Activated CD8-positive, alpha-beta T cell treated with anti-CD3 and anti-CD28 coated beads for 36 hours (primary cell): ENCODE measurements at regions of chr1 and their contacts with region 1.

Region 1: GRCh38 chr1:30801771-30802198 is 44.2 kb upstream of the LAPTM5 start:
- DNase-seq: peak; percentile 89
- ATAC-seq: peak; percentile 83
- H3K4me3 Mint-ChIP-seq: no peak overlapping the region
- H3K27ac Mint-ChIP-seq: no peak overlapping the region
- H3K4me1 Mint-ChIP-seq: peaks cover 2% of the 10 kb centered on the region
- H3K27me3 Mint-ChIP-seq: peaks cover 25% of the 10 kb centered on the region
- CTCF ChIP-seq: peak; percentile 97

Region 2: GRCh38 chr1:30732277-30732996 is 69.3 kb before region 1 on chr1:
- CTCF ChIA-PET with region 1: interaction called, 11 read pairs
- POLR2A ChIA-PET with region 1: no interaction called
- intact Hi-C with region 1: no loop called
- DNase-seq: no peak
- ATAC-seq: peak; percentile 32
- H3K4me3 Mint-ChIP-seq: no peak overlapping the region
- H3K27ac Mint-ChIP-seq: peak overlapping the region; percentile 73
- H3K4me1 Mint-ChIP-seq: peaks cover 22% of the 10 kb centered on the region
- H3K27me3 Mint-ChIP-seq: no peaks in the 10 kb centered on the region
- CTCF ChIP-seq: no peak

Region 3: DNA sequence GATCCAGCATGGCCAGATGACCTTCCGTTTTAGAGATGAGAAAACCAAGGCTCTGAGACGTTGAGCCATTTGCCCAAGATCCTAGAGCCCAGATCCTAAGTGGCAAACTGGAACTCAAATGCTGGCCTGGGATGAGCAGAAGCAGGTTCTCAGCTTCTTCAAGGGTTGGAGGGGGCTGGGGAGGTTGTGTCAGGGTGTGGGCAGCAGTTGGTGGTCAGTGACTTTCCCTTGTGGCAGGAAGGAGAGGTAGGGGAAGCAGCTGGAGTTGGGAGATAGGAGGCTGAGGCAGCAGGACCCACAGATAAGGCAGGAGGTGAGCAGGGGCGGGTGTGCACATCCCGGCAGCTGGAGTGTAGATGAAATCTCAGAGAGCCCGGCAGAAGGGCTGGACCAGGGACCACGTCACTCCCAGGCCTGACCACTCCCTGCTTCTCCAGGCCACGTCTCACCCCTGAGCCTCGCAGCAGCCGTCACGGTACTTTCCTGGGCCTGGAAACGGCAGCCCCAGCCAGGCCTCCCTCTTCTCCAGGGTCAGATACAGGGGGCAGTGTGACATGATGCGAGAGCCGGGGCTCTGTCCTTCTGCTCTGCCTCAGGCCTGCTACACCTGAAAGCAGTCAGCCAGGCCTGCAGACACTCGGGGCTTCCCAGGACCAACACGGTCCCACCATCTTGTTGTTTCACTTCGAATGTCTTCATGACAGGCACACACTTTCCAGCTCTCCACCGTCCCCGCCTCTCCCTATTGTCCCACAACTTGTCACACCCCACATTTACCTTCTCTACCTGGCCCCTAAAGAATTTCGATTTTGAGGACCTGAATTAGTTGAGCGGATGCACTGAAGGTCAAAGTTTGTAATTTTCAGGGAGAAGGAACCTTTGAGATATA is 32.7 kb before region 1 on chr1:
- CTCF ChIA-PET with region 1: no interaction called
- POLR2A ChIA-PET with region 1: no interaction called
- intact Hi-C with region 1: no loop called
- DNase-seq: no peak
- ATAC-seq: no peak
- H3K4me3 Mint-ChIP-seq: no peak overlapping the region
- H3K27ac Mint-ChIP-seq: peak overlapping the region; percentile 61
- H3K4me1 Mint-ChIP-seq: peaks cover 39% of the 10 kb centered on the region
- H3K27me3 Mint-ChIP-seq: no peaks in the 10 kb centered on the region
- CTCF ChIP-seq: no peak

Region 4: DNA sequence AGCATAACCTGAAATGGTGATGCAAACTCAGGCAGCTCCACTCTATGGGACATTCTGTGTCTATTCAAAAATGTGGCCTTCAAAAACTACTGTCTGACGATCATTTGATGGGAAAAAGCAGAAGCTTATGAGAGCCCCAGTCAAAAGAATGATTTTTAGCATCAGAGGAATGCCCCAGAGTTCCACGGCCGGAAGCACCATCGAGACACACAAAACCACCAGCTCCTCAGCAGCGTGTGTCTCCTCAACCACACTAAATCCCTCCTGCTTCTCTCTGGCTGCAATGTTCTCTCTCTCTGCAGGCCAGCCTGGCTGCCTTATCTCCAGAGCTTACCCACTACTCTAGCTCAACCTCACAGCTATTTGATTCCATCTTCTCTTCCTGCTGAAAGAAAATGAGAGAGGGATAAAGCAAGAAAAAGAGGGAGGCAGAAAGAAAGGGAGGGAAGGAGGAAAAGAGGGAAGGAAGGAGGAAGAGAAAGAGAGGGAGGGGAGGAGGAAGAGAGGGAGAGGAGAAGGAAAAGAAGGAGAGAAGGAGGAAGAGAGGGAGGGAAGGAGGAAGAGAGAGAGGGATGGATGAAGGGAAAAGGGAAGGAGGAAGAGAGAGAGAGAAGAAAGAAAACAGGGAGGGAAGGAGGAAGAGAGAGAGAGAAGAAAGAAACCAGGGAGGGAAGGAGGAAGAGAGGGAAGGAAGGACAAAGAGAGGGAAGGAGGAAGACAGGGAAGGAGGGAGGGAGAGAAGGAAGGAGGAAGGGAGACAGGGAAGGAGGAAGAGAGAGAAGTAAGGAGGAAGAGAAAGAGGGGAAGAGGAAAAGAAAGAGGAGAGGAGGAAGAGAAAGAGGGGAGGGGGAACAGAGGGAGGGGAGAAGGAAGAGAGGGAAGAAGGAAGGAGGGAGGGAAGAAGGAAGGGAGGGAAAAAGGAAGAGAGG is 10.7 kb before region 1 on chr1:
- CTCF ChIA-PET with region 1: interaction called, 80 read pairs
- POLR2A ChIA-PET with region 1: no interaction called
- intact Hi-C with region 1: no loop called
- DNase-seq: peak; percentile 32
- ATAC-seq: peak; percentile 56
- H3K4me3 Mint-ChIP-seq: no peak overlapping the region
- H3K27ac Mint-ChIP-seq: no peak overlapping the region
- H3K4me1 Mint-ChIP-seq: peaks cover 9% of the 10 kb centered on the region
- H3K27me3 Mint-ChIP-seq: peaks cover 4% of the 10 kb centered on the region
- CTCF ChIP-seq: no peak

Region 5: GRCh38 chr1:30823969-30824735 is 22.4 kb after region 1 on chr1:
- CTCF ChIA-PET with region 1: interaction called, 34 read pairs
- POLR2A ChIA-PET with region 1: interaction called, 3 read pairs
- intact Hi-C with region 1: no loop called
- DNase-seq: peak; percentile 70
- ATAC-seq: peak; percentile 92
- H3K4me3 Mint-ChIP-seq: peak overlapping the region; percentile 60
- H3K27ac Mint-ChIP-seq: no peak overlapping the region
- H3K4me1 Mint-ChIP-seq: peaks cover 22% of the 10 kb centered on the region
- H3K27me3 Mint-ChIP-seq: peaks cover 50% of the 10 kb centered on the region
- CTCF ChIP-seq: no peak

Region 6: GRCh38 chr1:30853350-30853749 is 51.6 kb after region 1 on chr1:
- CTCF ChIA-PET with region 1: interaction called, 15 read pairs
- POLR2A ChIA-PET with region 1: no interaction called
- intact Hi-C with region 1: no loop called
- DNase-seq: no peak
- ATAC-seq: no peak
- H3K4me3 Mint-ChIP-seq: no peak overlapping the region
- H3K27ac Mint-ChIP-seq: no peak overlapping the region
- H3K4me1 Mint-ChIP-seq: no peaks in the 10 kb centered on the region
- H3K27me3 Mint-ChIP-seq: peaks cover 9% of the 10 kb centered on the region
- CTCF ChIP-seq: no peak

Region 7: GRCh38 chr1:30919025-30919881 is 117.5 kb after region 1 on chr1:
- CTCF ChIA-PET with region 1: interaction called, 216 read pairs
- POLR2A ChIA-PET with region 1: interaction called, 4 read pairs
- intact Hi-C with region 1: no loop called
- DNase-seq: no peak
- ATAC-seq: no peak
- H3K4me3 Mint-ChIP-seq: no peak overlapping the region
- H3K27ac Mint-ChIP-seq: no peak overlapping the region
- H3K4me1 Mint-ChIP-seq: peaks cover 2% of the 10 kb centered on the region
- H3K27me3 Mint-ChIP-seq: peaks cover 2% of the 10 kb centered on the region
- CTCF ChIP-seq: no peak